ENCODE measurements at regions of chr19 and their contacts with region 1.

Region 1: DNA sequence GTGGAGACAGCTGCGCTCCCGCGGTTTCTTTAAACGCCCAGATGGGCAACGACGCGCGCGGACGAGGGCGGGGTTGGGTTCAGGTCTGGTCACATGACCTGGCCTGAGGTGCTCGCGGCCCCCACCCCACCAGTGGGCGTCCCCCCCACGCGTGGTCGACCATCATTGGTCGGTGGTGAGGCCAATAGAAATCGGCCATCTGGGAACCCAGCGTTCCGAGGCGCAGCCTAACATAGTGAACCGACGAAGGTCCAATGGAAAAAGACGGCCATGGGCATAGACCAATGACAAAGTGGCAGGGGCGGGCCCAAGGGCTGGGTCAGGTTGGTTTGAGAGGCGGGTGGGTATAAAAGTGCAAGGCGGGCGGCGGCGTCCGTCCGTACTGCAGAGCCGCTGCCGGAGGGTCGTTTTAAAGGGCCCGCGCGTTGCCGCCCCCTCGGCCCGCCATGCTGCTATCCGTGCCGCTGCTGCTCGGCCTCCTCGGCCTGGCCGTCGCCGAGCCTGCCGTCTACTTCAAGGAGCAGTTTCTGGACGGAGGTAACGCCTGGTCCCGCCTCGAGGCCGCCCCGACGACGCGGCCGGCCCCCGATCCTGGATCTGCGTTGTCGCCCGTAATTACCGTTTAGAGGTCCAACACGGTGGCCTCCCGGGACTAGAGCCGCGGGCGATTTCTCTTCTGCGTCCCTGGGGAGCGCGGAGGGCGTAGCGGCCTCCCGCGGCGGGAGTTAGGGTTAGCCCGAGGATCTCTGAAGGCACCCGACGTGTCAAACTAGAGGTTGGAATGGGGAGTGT is at the start of gene CALR:
- DNase-seq: peak; percentile 100
- H3K4me3 Mint-ChIP-seq: peak within 1 kb of the TSS; percentile 92
- H3K27ac Mint-ChIP-seq: peak within 1 kb of the TSS; percentile 94
- H3K4me1 Mint-ChIP-seq: peaks cover 51% of the 10 kb centered on the region
- H3K27me3 Mint-ChIP-seq: no peaks in the 10 kb centered on the region
- total RNA-seq, gene CALR: 407 to 431 TPM

Region 2: GRCh38 chr19:12139885-12140547 is 798.4 kb before region 1 on chr19 and contains the start of gene ZNF20:
- CTCF ChIA-PET with region 1: no interaction called
- intact Hi-C with region 1: no loop called
- DNase-seq: peak; percentile 95
- H3K4me3 Mint-ChIP-seq: peak within 1 kb of the TSS; percentile 92
- H3K27ac Mint-ChIP-seq: peak within 1 kb of the TSS; percentile 65
- H3K4me1 Mint-ChIP-seq: peaks cover 32% of the 10 kb centered on the region
- H3K27me3 Mint-ChIP-seq: no peaks in the 10 kb centered on the region
- total RNA-seq, gene ZNF20: 2.1 to 3.1 TPM

Region 3: GRCh38 chr19:12736995-12737834 is 201.2 kb before region 1 on chr19 and contains the start of gene GET3:
- CTCF ChIA-PET with region 1: no interaction called
- intact Hi-C with region 1: loop called (anchors 2 kb)
- DNase-seq: peak; percentile 90
- H3K4me3 Mint-ChIP-seq: peak within 1 kb of the TSS; percentile 100
- H3K27ac Mint-ChIP-seq: peak within 1 kb of the TSS; percentile 90
- H3K4me1 Mint-ChIP-seq: peaks cover 31% of the 10 kb centered on the region
- H3K27me3 Mint-ChIP-seq: no peaks in the 10 kb centered on the region
- total RNA-seq, gene GET3: 47.7 TPM

Region 4: DNA sequence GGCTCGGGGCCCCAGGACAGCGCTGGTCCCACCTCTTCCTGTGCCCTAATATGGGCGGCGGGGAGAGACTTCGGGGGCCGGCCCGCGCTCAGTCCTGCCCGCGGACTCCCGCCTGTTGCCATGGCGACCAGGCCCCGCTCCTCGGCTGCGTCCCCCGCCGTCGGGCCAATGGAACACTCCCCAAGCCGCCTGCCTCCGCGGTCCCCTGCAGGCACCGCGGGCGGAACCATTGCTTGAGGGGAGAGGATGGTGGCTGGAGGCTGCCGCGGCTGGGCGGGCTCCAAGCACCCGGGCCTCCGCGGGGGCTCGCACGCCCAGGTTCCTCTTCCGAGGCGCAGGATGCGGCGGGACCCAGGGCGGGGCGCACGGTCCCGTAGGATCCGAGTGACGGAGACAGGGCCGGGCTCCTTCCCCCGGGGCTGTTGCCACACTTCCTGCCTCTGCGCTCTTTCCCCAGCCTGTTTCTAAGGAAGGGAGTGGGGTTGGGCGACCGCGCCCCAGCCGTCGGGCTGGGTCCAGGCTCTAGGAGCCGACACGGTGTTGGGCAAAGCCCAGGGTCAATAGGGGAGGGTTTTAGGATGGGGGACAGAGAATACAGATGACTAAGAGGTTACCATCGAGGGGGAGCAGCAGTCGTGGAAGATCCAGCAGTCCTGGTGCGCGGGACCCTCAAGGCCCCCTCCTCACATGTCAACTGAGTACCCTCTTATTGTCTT is 148.4 kb before region 1 on chr19:
- CTCF ChIA-PET with region 1: no interaction called
- intact Hi-C with region 1: loop called (anchors 2 kb)
- DNase-seq: peak; percentile 97
- H3K4me3 Mint-ChIP-seq: peak overlapping the region; percentile 97
- H3K27ac Mint-ChIP-seq: peak overlapping the region; percentile 96
- H3K4me1 Mint-ChIP-seq: peaks cover 25% of the 10 kb centered on the region
- H3K27me3 Mint-ChIP-seq: no peaks in the 10 kb centered on the region

Region 5: GRCh38 chr19:12890787-12891552 is 47.5 kb before region 1 on chr19 and contains the start of gene GCDH:
- CTCF ChIA-PET with region 1: no interaction called
- intact Hi-C with region 1: loop called (anchors 1 kb)
- DNase-seq: peak; percentile 98
- H3K4me3 Mint-ChIP-seq: peak within 1 kb of the TSS; percentile 93
- H3K27ac Mint-ChIP-seq: peak within 1 kb of the TSS; percentile 73
- H3K4me1 Mint-ChIP-seq: peaks cover 25% of the 10 kb centered on the region
- H3K27me3 Mint-ChIP-seq: no peaks in the 10 kb centered on the region
- total RNA-seq, gene GCDH: 36.3 to 38.3 TPM

Region 6: GRCh38 chr19:12956446-12957388 is 18.3 kb after region 1 on chr19 and contains the start of gene GADD45GIP1:
- CTCF ChIA-PET with region 1: no interaction called
- intact Hi-C with region 1: loop called (anchors 2 kb)
- DNase-seq: peak; percentile 85
- H3K4me3 Mint-ChIP-seq: peak within 1 kb of the TSS; percentile 88
- H3K27ac Mint-ChIP-seq: peak within 1 kb of the TSS; percentile 96
- H3K4me1 Mint-ChIP-seq: peaks cover 43% of the 10 kb centered on the region
- H3K27me3 Mint-ChIP-seq: no peaks in the 10 kb centered on the region
- total RNA-seq, gene GADD45GIP1: 27.4 to 28.6 TPM

Region 7: GRCh38 chr19:13012690-13013608 is 74.5 kb after region 1 on chr19:
- CTCF ChIA-PET with region 1: no interaction called
- intact Hi-C with region 1: loop called (anchors 2 kb)
- DNase-seq: peak; percentile 83
- H3K4me3 Mint-ChIP-seq: peak overlapping the region; percentile 73
- H3K27ac Mint-ChIP-seq: peak overlapping the region; percentile 83
- H3K4me1 Mint-ChIP-seq: peaks cover 22% of the 10 kb centered on the region
- H3K27me3 Mint-ChIP-seq: peaks cover 40% of the 10 kb centered on the region

Region 8: GRCh38 chr19:13839130-13839937 is 900.9 kb after region 1 on chr19:
- CTCF ChIA-PET with region 1: no interaction called
- intact Hi-C with region 1: loop called (anchors 5 kb)
- DNase-seq: peak; percentile 95
- H3K4me3 Mint-ChIP-seq: peak overlapping the region; percentile 93
- H3K27ac Mint-ChIP-seq: peak overlapping the region; percentile 99
- H3K4me1 Mint-ChIP-seq: peaks cover 47% of the 10 kb centered on the region
- H3K27me3 Mint-ChIP-seq: no peaks in the 10 kb centered on the region